ENCODE measurements at regions of chr19 and their contacts with region 1.

Region 1: DNA sequence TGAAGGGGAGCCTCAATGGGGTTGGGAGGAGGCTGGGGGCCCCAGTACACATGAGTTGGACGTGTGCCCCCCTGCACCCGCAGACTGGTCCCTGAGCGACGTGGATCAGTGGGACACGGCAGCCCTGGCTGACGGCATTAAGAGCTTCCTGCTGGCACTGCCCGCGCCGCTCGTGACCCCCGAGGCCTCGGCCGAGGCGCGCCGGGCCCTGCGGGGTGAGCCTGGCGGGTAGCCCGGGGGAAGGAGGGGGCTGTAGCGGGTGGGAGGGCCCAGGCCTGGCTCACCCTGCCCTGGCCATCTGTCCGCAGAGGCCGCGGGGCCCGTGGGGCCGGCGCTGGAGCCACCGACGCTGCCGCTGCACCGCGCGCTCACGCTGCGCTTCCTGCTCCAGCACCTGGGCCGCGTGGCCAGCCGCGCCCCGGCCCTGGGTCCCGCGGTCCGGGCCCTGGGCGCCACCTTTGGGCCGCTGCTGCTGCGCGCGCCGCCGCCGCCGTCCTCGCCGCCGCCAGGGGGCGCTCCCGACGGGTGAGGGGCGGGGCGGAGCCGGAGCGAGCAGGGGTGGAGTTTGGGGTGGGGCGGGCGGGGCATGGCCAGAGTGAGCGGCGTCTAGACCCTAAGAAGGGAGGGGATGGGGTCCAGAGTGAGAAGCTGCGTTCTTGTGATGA is 8.1 kb downstream of the PIK3R2 start:
- DNase-seq: peak; percentile 83
- H3K4me3 ChIP-seq: peak overlapping the region in 3 of 4 donors; percentile 30 to 45 (median 42)
- H3K27ac ChIP-seq: peak overlapping the region; percentile 68 to 81 (median 79)
- H3K4me1 ChIP-seq: peaks cover 26 to 35% (median 32%) of the 10 kb centered on the region in 4 donors
- H3K27me3 ChIP-seq: no peaks in the 10 kb centered on the region
- CTCF ChIP-seq: peak in 3 of 5 experiments; percentile 58 to 71 (median 71)
- EP300 ChIP-seq: no peak
- POLR2A ChIP-seq: no peak

Region 2: GRCh38 chr19:18112989-18113478 is 48.1 kb before region 1 on chr19:
- in situ Hi-C with region 1: no loop called
- intact Hi-C with region 1: loop called (anchors 5 kb)
- DNase-seq: peak; percentile 91
- H3K4me3 ChIP-seq: no peak overlapping the region
- H3K27ac ChIP-seq: peak overlapping the region in 3 of 4 donors; percentile 15 to 39 (median 38)
- H3K4me1 ChIP-seq: peaks cover 16 to 45% (median 29%) of the 10 kb centered on the region in 4 donors
- H3K27me3 ChIP-seq: no peaks in the 10 kb centered on the region
- CTCF ChIP-seq: peak; percentile 78 to 91 (median 86)
- EP300 ChIP-seq: no peak
- POLR2A ChIP-seq: no peak

Region 3: GRCh38 chr19:18183529-18183928 is 22.4 kb after region 1 on chr19:
- in situ Hi-C with region 1: no loop called
- intact Hi-C with region 1: no loop called
- DNase-seq: peak; percentile 48
- H3K4me3 ChIP-seq: no peak overlapping the region
- H3K27ac ChIP-seq: peak overlapping the region; percentile 20 to 75 (median 62)
- H3K4me1 ChIP-seq: peaks cover 0 to 15% (median 9%) of the 10 kb centered on the region in 4 donors
- H3K27me3 ChIP-seq: no peaks in the 10 kb centered on the region
- CTCF ChIP-seq: no peak
- EP300 ChIP-seq: no peak
- POLR2A ChIP-seq: no peak

Measured in transverse colon (tissue), 4 donors.